Activated T-helper 1 cell treated with anti-CD3 and anti-CD28 coated beads, Interleukin-12 subunit alpha, Interleukin-12 subunit beta, Interleukin-2, Interleukin-4 antibody, amounts not matched to agents 30 ng/mL and 10 ng/mL and 1 ng/mL, durations not matched to agents 14 hours and 24 hours and 36 hours (primary cell): ENCODE measurements at regions of chr1 and their contacts with region 1.

Region 1: GRCh38 chr1:52726265-52727113 is at the start of gene ZYG11B:
- DNase-seq: peak; percentile 88
- H3K4me3 Mint-ChIP-seq: peak within 1 kb of the TSS; percentile 88
- H3K27ac Mint-ChIP-seq: peak within 1 kb of the TSS; percentile 82
- H3K4me1 Mint-ChIP-seq: peaks cover 42% of the 10 kb centered on the region
- H3K27me3 Mint-ChIP-seq: no peaks in the 10 kb centered on the region
- total RNA-seq, gene ZYG11B: 8.4 and 8.5 TPM in 2 replicates

Region 2: DNA sequence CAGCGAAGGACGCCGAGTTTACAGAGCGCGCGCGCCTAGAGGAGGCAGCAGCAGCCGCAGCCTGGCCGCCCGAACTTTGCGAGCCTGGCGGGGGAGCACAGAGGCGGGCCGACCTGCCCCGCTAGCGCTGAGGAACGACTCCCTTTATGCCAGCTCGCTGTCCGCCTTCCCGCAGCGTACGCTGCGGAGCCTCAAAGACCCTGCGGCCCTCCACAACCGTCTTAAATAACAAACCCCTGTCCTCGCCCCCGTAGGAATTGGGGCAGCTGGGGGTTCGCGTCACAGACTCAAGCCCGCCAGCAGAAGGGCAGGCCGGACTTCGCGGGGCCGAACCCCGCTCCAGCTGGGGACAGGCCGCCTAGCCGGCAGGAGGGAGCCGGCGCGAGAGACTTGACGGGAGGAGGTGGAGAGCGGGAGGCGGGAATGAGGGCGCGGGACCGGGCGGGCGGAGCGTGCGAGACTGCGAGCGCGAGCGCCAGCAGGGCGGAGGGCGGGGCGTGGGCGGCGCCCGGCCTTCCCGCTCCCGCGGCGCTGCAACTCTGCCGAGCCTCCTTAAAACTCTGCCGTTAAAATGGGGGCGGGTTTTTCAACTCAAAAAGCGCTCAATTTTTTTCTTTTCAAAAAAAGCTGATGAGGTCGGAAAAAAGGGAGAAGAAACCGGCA is 1758.2 kb before region 1 on chr1:
- intact Hi-C with region 1: loop called (anchors 5 kb)
- DNase-seq: peak; percentile 82
- H3K4me3 Mint-ChIP-seq: peak overlapping the region; percentile 99
- H3K27ac Mint-ChIP-seq: peak overlapping the region; percentile 98
- H3K4me1 Mint-ChIP-seq: peaks cover 39% of the 10 kb centered on the region
- H3K27me3 Mint-ChIP-seq: peaks cover 10% of the 10 kb centered on the region

Region 3: DNA sequence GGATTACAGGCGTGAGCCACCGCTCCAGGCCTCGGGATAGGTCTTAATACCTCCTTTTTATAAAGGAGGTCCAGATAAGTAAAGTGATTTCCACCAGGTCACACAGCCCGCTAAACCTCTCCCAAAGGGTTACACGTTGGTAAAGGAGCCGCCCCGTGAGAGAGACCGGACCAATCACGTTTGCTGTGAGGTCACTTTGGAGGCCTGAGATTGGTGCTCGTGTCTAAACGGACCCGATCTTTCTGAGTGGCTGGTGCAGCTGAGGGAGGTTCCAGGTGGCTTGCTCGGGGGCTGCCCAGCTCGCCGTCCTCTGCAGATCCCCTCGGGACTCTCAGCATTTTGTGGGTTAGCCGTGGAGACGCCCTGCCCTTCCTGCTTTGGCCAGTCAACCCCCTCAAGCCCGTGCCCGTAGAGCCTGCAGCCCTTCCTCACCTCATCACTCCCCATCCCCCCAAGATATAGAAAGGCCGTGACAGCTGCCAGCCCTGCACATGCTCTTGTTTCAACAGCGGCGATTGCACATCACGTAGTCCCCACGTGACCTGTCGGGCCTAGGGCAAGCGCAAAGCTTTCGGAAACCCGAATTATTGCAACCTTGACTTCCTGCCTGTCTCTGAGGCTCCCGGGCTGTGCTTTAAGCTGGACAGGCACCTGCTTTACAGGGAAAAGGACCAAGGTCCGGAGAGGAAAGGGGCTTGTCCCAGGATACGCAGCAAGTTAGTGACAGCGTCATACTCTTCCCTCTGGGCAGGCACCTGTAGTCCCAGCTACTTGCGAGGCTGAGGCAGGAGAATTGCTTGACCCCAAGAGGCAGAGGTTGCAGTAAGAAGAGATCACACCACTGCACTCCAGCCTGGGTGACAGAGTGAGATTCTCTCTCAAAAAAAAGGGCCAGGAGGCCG is 23.4 kb before region 1 on chr1:
- intact Hi-C with region 1: loop called (anchors 1 kb)
- DNase-seq: peak; percentile 80
- H3K4me3 Mint-ChIP-seq: peak overlapping the region; percentile 82
- H3K27ac Mint-ChIP-seq: peak overlapping the region; percentile 88
- H3K4me1 Mint-ChIP-seq: peaks cover 32% of the 10 kb centered on the region
- H3K27me3 Mint-ChIP-seq: peaks cover 4% of the 10 kb centered on the region

Region 4: GRCh38 chr1:52927212-52928014 is 200.9 kb after region 1 on chr1 and contains the start of gene SCP2:
- intact Hi-C with region 1: loop called (anchors 2 kb)
- DNase-seq: peak; percentile 74
- H3K4me3 Mint-ChIP-seq: peak within 1 kb of the TSS; percentile 90
- H3K27ac Mint-ChIP-seq: peak within 1 kb of the TSS; percentile 83
- H3K4me1 Mint-ChIP-seq: peaks cover 15% of the 10 kb centered on the region
- H3K27me3 Mint-ChIP-seq: peaks cover 8% of the 10 kb centered on the region
- total RNA-seq, gene SCP2: 54.7 and 58.3 TPM in 2 replicates

Region 5: DNA sequence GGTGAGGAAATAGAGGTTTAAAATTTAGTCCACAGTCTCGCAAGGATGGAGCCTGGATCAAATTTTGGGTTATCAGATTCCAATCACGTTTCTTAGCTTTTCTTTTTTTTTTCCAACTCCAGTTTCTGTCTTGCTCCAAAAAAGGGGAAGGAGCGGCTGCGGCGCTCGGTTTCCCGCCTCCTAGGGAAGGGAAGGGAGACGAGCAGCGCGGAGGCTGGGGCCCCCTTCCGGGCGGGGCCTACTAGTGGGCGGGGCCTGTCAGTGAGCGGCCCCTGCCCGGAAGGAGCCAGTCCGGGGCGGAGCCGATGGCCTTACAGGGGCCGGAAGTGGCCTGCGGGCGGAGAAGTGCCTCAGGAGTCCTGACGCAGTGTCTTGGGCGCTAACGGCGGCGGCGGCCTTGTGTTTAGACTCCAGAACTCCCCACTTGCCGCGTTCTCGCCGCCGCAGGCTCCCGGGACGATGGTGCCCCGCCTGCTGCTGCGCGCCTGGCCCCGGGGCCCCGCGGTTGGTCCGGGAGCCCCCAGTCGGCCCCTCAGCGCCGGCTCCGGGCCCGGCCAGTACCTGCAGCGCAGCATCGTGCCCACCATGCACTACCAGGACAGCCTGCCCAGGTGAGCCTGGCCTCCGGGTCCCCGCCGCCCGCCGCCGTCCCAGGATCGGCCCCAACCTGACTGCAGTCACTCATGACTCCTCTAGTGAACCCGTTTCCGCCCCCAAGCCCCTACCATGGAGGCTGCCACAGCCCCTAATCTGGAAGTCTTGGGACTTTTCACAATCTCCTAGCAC is 470.2 kb after region 1 on chr1 and contains the start of gene CPT2:
- intact Hi-C with region 1: loop called (anchors 5 kb)
- DNase-seq: peak; percentile 92
- H3K4me3 Mint-ChIP-seq: peak within 1 kb of the TSS; percentile 95
- H3K27ac Mint-ChIP-seq: peak within 1 kb of the TSS; percentile 92
- H3K4me1 Mint-ChIP-seq: peaks cover 28% of the 10 kb centered on the region
- H3K27me3 Mint-ChIP-seq: no peaks in the 10 kb centered on the region
- total RNA-seq, gene CPT2: 18.5 and 19.4 TPM in 2 replicates